ENCODE measurements at regions of chr10 and their contacts with region 1.

Region 1: DNA sequence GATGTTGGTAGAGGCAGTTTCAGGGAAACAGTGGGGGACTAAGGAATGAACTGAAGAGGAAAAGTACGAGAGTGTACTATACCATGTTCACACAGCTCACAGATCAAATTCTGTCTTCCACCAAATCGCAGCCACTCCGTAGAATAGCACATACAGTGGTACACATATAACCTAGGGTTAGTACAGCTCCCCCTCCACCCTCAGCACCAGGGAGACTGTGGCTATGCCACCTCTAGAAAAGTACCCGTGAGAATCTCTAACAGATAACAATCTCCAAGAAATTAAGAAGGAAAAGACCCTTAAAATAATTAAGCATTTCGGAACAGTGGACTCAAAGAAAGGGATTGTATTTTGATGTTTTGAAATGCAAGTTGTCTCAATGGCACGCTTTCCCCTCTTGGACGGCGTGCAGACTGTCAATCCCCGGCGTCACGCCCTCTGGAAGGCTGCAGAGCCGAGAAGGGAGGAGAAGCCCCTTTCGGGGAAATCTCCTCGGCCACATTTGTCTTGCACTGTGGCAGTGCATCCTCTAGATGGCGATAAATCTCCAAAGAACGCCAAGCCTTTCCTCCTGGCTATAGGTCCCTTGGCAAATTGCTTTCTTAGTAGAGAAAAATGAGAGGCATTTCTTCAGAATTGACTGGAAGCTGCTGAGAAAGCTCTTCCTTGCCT is 345.0 kb downstream of the REEP3 start:
- DNase-seq: peak; percentile 82

Region 2: GRCh38 chr10:63878428-63878827 is 12.2 kb after region 1 on chr10:
- CTCF ChIA-PET with region 1: interaction called, 10 read pairs
- POLR2A ChIA-PET with region 1: interaction called, 3 read pairs
- DNase-seq: no peak

Region 3: GRCh38 chr10:63976538-63976937 is 110.3 kb after region 1 on chr10:
- CTCF ChIA-PET with region 1: interaction called, 29 read pairs
- POLR2A ChIA-PET with region 1: no interaction called
- DNase-seq: peak; percentile 62

Measured in HEK293T (cell line).